ENCODE measurements at regions of chr1 and their contacts with region 1.

Region 1: GRCh38 chr1:58848818-58849411 is 65.1 kb upstream of the JUN start:
- DNase-seq: peak; percentile 99
- ATAC-seq: peak; percentile 94
- H3K4me3 ChIP-seq: peak overlapping the region; percentile 34; the same call in 1 of the 2 replicates
- H3K27ac ChIP-seq: peak overlapping the region; percentile 94
- H3K4me1 ChIP-seq: peaks cover 44% of the 10 kb centered on the region
- H3K27me3 ChIP-seq: no peaks in the 10 kb centered on the region
- CTCF ChIP-seq: no peak

Region 2: DNA sequence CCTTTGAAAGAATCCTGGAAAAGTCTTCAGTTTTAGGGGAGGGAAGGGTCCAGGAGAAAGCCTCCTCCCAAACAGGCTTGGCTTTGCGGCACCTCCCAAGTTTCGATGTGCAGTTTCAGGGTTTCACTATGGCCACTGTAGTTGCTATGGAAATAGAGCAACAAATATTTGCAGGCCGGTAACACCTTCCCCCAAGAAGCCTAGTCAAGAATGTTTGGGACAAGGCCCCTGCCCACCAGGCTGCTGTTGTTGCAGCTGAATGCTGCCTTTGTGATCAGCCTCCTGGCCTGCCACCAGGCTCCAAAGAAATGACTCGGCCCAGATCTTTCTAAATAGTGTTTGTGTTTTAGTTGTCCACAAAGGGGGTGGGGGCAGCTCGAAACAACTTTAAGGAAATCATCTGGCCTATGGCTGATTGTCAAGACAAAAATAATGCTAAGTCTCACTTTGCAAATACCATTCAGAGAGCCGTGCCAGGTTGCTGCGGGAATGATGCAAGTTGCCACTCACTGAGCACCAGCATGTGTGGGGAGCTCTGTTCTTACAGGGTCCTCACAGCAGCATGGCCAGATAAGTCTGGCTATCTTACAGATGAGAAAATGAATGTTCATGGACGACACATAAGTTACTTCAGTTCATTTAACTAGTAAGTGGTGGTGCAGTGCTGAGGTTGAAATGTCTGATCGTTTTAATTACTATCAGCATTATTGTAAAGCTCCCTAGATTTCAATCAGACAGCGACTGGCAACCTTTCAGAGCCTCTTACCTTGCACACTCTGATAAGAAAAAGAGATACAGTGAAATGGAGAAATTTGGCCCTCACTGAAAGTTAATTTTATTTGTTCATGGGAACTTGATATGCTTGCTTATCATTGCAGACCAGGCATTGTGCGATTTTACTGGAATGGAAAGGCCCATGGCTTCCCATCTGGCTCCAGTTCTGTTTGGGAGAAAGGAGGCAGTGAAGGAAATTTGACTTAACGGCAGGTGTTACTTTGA is 26.1 kb after region 1 on chr1:
- CTCF ChIA-PET with region 1: no interaction called
- POLR2A ChIA-PET with region 1: no interaction called
- intact Hi-C with region 1: loop called (anchors 2 kb)
- DNase-seq: peak; percentile 27
- ATAC-seq: peak; percentile 59
- H3K4me3 ChIP-seq: no peak overlapping the region
- H3K27ac ChIP-seq: no peak overlapping the region
- H3K4me1 ChIP-seq: peaks cover 13% of the 10 kb centered on the region
- H3K27me3 ChIP-seq: no peaks in the 10 kb centered on the region
- CTCF ChIP-seq: no peak

Region 3: DNA sequence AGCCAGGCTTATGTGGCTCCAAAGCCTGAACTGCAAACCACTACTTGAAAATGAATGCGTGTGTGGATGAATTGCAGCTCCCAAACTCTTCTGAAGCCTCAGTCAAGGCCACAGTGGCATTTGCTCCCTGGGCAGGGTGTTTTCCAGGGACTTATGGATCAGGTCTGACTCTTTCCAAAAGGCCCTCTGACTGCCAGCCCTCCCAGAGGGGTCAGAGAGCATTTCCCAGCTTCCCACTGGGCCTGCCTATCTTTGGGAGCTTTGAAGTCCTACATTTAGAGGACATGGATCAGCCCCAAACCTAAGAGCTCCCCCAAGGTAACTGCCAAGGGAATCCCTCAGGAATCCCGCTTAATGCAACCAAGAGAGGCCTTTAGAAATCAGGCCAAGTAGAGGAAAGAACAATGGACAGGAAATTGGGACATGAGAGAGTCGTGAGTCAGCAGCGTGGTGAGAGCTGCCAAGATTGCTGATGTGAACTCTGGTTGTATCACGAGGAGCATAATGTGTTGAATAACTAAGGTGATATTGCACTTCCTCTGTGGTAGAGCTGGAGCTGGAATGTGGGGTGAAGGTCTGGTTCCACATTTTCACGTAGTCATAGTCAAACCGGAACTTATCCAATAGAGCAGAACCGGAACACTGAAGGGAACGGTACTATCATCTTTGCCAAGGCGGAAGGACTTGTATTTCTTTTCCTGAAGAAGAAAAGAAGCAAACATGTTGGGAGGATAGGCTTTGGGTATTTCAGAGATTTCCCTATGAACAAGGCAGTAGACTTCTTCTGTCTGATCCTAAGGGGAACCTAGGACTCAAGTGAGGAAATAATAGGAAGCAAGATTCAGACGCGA is 34.3 kb after region 1 on chr1:
- CTCF ChIA-PET with region 1: interaction called, 5 read pairs
- POLR2A ChIA-PET with region 1: no interaction called
- intact Hi-C with region 1: loop called (anchors 1 kb)
- DNase-seq: peak; percentile 98
- ATAC-seq: peak; percentile 79
- H3K4me3 ChIP-seq: no peak overlapping the region
- H3K27ac ChIP-seq: peak overlapping the region; percentile 83
- H3K4me1 ChIP-seq: peaks cover 55% of the 10 kb centered on the region
- H3K27me3 ChIP-seq: no peaks in the 10 kb centered on the region
- CTCF ChIP-seq: no peak

Region 4: DNA sequence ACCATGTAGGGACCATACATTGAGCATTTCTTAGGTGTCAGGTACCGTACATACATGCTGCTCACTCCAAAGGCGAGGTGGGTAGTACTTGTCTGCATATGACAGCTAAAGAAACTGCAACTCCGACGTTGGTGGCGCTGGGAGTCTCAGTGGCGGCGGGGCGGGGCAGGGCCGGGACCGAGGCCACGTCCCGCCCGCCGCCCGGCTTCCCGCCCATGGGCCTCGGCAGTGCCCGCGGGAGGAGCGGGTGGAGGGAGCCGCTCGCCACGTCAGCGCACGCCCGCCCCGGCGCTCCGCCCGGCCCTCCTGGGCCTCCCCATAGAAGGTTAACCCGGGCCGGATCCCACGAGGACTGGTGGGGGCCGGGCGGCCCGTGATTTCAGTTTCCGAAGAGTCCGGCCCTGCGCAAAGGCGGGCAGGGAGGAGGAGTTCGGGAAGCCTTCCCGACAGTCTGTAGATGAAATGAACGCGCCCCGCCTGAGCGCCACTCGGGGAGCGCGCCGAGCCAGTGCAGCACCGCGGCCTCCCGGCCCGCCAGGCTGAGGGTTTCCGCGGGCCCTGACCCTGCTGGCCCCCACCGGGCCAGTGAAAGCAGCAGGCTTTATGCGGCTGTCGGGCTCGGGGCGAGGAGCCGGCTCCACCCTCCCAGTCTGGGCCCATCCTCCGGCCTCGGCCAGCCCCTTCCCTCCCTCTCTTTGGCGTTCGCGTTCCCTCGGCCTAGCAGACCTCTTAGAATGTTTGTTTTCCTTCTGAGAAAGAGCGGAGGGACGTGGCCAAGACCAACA is 54.8 kb after region 1 on chr1:
- CTCF ChIA-PET with region 1: no interaction called
- POLR2A ChIA-PET with region 1: interaction called, 3 read pairs
- intact Hi-C with region 1: loop called (anchors 1 kb)
- DNase-seq: peak; percentile 87
- ATAC-seq: peak; percentile 86
- H3K4me3 ChIP-seq: peak overlapping the region; percentile 78
- H3K27ac ChIP-seq: peak overlapping the region; percentile 92
- H3K4me1 ChIP-seq: peaks cover 30% of the 10 kb centered on the region
- H3K27me3 ChIP-seq: no peaks in the 10 kb centered on the region
- CTCF ChIP-seq: no peak

Region 5: GRCh38 chr1:59477286-59477685 is 628.4 kb after region 1 on chr1:
- CTCF ChIA-PET with region 1: no interaction called
- POLR2A ChIA-PET with region 1: no interaction called
- intact Hi-C with region 1: no loop called
- DNase-seq: peak; percentile 87
- ATAC-seq: peak; percentile 84
- H3K4me3 ChIP-seq: no peak overlapping the region
- H3K27ac ChIP-seq: peak overlapping the region; percentile 54
- H3K4me1 ChIP-seq: peaks cover 28% of the 10 kb centered on the region
- H3K27me3 ChIP-seq: no peaks in the 10 kb centered on the region
- CTCF ChIP-seq: no peak